Dorsolateral prefrontal cortex (tissue), 120 donors: ENCODE measurements at regions of chr1 and their contacts with region 1.

Region 1: DNA sequence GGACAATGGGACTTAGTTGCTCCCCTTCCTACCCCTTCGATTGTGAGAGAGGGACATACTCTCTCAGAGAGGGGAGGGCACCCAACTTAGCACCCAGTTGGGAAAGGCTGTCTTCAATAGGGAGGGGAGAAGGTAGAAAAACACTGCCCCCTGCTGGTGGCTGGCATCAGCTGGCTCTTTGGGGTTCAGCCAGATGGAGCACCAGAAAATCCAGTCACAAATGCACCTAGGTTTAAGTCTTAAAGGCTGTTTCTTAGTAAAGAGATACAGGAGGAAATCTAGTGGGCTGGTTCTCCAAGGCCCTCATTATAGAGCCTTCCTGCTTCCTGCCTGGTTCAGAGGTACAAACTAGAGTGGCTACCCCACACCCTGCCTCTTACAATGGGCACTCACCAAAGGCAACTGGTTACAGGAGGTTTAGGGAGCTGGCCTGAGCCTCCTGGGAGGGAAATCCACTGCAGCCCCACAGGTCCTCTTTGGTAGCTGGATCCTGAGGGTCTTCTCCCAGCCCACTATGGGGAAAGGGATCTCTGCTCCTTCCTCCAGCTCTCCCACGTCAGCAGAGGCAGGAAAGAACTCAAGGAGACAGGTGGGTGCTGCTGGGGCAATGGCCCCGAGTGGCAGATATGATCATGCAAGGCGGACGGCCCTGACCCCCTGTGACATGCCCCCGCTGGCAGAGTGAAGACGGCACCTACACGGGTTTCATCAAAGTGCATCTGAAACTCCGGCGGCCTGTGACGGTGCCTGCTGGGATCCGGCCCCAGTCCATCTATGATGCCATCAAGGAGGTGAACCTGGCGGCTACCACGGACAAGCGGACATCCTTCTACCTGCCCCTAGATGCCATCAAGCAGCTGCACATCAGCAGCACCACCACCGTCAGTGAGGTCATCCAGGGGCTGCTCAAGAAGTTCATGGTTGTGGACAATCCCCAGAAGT is 28.3 kb downstream of the EIF2D start:
- DNase-seq: peak; percentile 69 to 89 (median 79)
- H3K4me3 ChIP-seq: no peak overlapping the region
- H3K27ac ChIP-seq: peak overlapping the region in 4 of 59 donors; percentile 35 to 63 (median 50)
- H3K27me3 ChIP-seq: no peaks in the 10 kb centered on the region
- CTCF ChIP-seq: peak; percentile 78 to 98 (median 95)

Region 2: GRCh38 chr1:206534552-206534951 is 49.4 kb before region 1 on chr1:
- intact Hi-C with region 1: no loop called
- DNase-seq: no peak
- H3K4me3 ChIP-seq: no peak overlapping the region
- H3K27ac ChIP-seq: no peak overlapping the region
- H3K27me3 ChIP-seq: no peaks in the 10 kb centered on the region
- CTCF ChIP-seq: no peak

Region 3: DNA sequence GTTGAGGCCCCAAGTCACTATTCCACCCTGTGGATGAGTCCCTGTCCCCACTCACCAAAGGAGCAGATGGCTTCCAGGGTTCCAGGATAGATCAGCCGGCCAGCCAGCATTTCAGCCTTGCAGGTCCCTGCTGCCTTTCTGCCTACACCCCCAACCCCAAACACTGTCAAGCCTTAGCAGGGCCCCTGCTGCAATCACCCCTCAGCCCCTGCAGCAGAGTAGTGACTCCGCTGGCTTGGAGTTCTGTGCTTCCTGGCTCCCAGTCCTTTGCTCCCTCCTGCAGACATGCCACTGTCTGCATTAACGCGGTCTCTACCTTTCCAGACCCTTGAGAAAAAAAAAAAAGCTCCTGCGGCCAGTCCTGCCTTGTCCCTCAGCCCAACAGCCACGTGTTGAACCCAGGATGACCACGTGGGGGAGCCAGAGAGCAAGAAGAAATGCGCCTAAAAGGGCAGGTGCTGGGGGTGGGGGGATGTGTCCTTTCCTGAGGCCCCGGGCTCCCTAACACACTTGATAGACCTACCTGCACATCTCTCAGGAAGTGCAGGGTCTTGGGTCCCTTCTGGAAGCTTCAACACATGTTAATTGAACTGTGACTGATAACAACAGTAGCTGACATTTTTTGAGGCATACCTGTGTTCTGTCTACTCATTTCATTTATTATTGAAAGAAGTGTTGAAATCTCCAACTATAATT is 39.3 kb before region 1 on chr1:
- intact Hi-C with region 1: loop called (anchors 2 kb)
- DNase-seq: peak in 9 of 10 donors; percentile 46 to 77 (median 65)
- H3K4me3 ChIP-seq: no peak overlapping the region
- H3K27ac ChIP-seq: no peak overlapping the region
- H3K27me3 ChIP-seq: no peaks in the 10 kb centered on the region
- CTCF ChIP-seq: peak; percentile 46 to 92 (median 82)